ENCODE measurements at regions of chr2 and their contacts with region 1.

Region 1: DNA sequence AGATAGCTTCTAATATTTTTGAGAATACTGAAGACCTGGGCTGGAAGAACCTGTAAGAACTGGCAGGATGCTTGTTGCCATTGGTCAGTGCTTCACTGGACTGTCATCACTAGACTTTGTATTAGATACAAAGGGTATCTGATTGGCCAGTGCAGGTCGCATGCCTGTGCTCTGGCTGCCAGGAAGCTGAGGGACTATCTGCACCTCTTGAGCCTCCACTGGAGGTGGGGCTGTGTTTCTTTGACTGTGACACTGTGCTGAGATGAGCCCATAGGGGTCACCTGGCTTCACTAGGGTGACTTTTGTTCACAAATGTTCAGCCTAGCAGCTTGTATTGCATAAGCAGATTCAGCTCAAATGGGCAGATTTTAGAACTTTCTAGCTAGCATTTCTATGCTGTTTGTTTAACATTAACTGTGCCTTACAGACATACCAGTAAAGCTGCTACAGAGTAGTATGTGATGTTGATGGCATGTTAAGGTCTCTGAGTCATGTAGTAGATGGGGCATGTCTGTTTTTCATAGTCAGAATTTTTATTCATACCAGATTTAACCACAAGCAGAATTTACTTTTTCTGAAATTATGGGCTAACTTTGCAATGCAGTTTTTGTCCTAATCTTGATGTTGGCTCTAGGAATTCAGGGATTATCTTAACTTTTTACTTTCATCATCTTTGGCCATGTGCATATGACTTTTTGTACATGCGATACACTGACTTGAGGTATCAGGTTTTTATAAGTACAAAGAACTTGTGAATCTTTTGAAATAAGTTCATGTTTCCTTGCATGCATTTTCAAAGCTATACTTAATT is 56.1 kb downstream of the RHBDD1 start:
- DNase-seq: peak; percentile 14
- H3K4me3 ChIP-seq: no peak overlapping the region
- H3K27ac ChIP-seq: no peak overlapping the region
- H3K4me1 ChIP-seq: peaks cover 8% of the 10 kb centered on the region
- CTCF ChIP-seq: 0 out of 2 replicates have a peak, but pooled peaks have one; percentile 17

Region 2: GRCh38 chr2:226855766-226856165 is 36.2 kb before region 1 on chr2:
- CTCF ChIA-PET with region 1: no interaction called
- POLR2A ChIA-PET with region 1: interaction called, 3 read pairs
- intact Hi-C with region 1: loop called (anchors 5 kb)
- DNase-seq: no peak
- H3K4me3 ChIP-seq: no peak overlapping the region
- H3K27ac ChIP-seq: no peak overlapping the region
- H3K4me1 ChIP-seq: no peaks in the 10 kb centered on the region
- CTCF ChIP-seq: no peak

Measured in OCI-LY7 (cell line).